ENCODE measurements at regions of chr5 and their contacts with region 1.

Region 1: DNA sequence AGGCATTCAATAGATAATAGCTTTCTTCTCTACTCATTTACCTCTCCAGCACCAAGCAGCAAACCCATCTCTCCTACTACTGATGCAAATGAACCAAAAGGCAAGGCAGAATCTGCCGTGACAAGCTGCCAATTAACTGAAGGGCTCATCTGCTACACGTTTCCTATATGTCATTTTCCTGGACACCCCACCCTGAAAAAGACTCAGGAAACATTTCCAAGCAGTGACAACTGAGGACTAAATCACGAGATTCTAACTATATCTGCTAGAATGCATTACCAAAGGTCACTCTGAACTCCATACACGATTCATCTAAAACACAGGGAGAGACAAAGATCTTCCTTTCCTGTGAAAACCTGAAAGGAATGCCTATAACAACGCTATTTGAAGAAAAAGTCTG is 12.9 kb downstream of the PLPP1 start:
- DNase-seq: no peak
- ATAC-seq: peak in 1 of 2 donors; percentile 33
- H3K4me3 ChIP-seq: no peak overlapping the region
- H3K27ac ChIP-seq: no peak overlapping the region
- H3K4me1 ChIP-seq: peaks cover 8% of the 10 kb centered on the region
- H3K27me3 ChIP-seq: no peaks in the 10 kb centered on the region

Region 2: DNA sequence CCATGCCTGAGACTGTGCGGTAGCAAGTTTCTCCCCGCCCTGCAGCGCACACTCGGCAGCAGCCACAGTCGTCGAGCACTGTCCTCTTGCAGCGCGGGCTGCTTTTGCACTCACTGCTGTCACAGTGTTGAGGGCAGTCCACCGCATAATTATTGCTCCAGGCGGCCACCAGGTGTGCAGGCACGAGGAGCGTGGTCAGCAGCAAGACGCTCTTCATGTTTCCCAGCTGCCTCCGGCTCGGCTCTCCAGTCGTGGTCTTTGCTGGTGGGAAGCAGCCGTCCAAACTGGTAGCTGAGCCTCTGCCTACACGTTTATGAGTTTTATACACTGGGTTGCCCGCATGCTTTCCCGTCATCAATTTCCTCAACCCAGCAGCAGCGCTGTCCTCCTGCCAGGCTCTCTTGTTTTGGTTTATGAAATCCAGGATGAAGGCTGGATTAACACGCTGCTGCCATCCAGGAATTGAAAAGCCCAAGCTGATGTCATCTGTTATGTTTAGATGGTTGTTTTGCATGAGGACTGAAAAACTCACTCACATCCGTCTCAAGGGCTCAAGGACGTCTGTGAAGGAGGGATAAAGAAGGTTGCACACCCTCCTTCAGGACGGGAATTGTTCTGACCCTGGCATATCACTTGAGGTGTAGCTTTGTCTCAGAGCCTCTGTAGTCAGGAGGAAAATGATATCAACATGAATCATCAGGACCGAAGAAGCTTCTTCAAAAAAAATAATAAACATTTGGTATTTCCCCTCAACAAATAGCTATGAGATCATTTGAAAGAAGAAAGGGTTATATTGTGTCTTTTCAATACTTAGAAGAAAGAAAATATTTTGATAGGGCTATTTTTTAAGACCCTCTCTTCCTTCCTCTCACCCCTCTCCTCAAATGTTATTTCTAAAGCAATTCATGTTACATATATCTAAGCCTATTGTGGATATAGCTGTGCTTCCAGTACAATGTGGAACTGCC is 536.3 kb before region 1 on chr5 and contains the start of gene ESM1:
- intact Hi-C with region 1: no loop called
- DNase-seq: no peak
- ATAC-seq: peak in 1 of 2 donors; percentile 25
- H3K4me3 ChIP-seq: peak within 1 kb of the TSS; percentile 19
- H3K27ac ChIP-seq: no peak within 1 kb of the TSS
- H3K4me1 ChIP-seq: no peaks in the 10 kb centered on the region
- H3K27me3 ChIP-seq: peaks cover 3% of the 10 kb centered on the region
- total RNA-seq, gene ESM1: 0.20 to 0.65 TPM in 2 of 4 donors, not detected in the others

Region 3: GRCh38 chr5:55471468-55471867 is 50.4 kb before region 1 on chr5:
- intact Hi-C with region 1: loop called in 1 of 4 experiments (anchors 10 kb)
- DNase-seq: no peak
- ATAC-seq: no peak
- H3K4me3 ChIP-seq: no peak overlapping the region
- H3K27ac ChIP-seq: no peak overlapping the region
- H3K4me1 ChIP-seq: peaks cover 1% of the 10 kb centered on the region
- H3K27me3 ChIP-seq: no peaks in the 10 kb centered on the region

Region 4: DNA sequence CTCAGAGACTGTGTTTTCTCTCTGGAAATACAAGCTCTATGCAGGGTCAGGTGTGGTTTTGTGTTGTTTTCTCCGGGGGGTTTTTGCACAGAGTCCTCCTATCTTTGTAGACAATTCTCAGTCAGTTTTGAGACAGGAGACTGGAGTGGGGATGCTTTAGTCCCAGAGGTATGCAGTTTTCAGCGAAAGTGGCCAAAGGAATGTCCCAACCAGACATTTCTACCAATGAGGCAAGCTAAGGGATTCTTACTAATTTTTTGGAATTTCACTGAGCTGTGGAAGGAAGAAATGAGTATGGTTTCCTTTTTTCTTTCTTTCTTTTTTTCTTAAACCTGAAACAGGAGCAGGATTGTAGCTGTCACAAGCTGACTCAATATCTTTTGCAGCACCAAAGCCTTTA is 48.1 kb after region 1 on chr5:
- intact Hi-C with region 1: no loop called
- DNase-seq: no peak
- ATAC-seq: peak in 1 of 2 donors; percentile 25
- H3K4me3 ChIP-seq: no peak overlapping the region
- H3K27ac ChIP-seq: peak overlapping the region; percentile 21
- H3K4me1 ChIP-seq: peaks cover 3% of the 10 kb centered on the region
- H3K27me3 ChIP-seq: no peaks in the 10 kb centered on the region

Region 5: DNA sequence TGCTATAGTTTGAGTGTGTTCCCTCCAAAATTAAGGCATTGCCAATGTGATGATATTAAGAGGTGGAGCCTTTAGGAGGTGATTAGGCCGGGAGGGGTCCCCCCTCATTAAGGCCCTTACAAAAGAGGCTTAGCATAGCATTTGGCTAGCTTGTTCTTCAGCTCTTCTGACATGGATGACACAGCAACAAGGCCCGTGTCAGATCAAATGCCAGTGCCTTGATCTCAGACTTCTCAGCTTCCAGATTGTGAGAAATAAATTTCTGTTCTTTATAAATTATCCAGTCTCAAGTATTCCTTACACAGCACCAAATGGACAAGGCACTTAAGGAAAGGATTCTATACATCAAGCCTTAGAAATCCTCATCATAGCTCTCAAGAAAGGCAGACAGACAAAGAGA is 158.5 kb after region 1 on chr5:
- intact Hi-C with region 1: loop called in 1 of 4 experiments (anchors 10 kb)
- DNase-seq: no peak
- ATAC-seq: peak; percentile 49 to 66
- H3K4me3 ChIP-seq: no peak overlapping the region
- H3K27ac ChIP-seq: no peak overlapping the region
- H3K4me1 ChIP-seq: peaks cover 4% of the 10 kb centered on the region
- H3K27me3 ChIP-seq: no peaks in the 10 kb centered on the region

Region 6: DNA sequence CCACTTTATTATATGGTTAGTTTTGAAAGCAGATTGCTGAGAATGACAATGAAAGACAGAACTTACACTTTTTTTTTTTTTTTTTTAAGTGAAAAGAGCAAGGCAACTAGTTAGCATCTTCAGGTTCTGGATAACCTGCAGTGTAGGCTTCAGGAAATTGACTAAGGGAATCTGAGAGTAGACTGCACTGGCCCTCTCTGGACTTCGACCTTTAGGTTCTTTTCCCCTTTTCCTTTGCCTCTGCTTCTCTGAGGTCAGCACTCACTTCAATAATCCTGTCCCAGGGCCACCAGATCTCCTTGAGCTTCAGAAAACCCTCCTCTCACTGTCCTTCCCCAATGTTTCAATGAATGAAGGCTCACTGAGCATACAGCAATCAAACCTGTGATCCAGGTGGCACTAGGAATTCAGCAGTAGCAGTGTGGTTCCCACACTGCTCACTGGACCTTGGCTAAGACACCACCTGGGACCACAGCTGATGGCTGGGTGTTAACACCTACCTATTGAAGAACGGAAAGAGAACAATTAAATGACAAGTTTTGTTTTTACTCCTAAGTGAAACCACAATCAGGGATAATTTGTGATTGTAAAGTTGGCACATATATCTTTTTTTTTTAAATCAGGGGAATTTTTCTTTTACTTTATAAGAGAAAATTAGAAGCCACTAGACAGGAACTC is 558.6 kb after region 1 on chr5:
- intact Hi-C with region 1: no loop called
- DNase-seq: no peak
- ATAC-seq: no peak
- H3K4me3 ChIP-seq: no peak overlapping the region
- H3K27ac ChIP-seq: no peak overlapping the region
- H3K4me1 ChIP-seq: no peaks in the 10 kb centered on the region
- H3K27me3 ChIP-seq: no peaks in the 10 kb centered on the region